ENCODE measurements at regions of chr17 and their contacts with region 1.

Region 1: GRCh38 chr17:44363613-44364159 is at the start of gene FAM171A2:
- DNase-seq: peak; percentile 66 to 74
- ATAC-seq: peak; percentile 76 to 83
- H3K4me3 ChIP-seq: peak within 1 kb of the TSS; percentile 77
- H3K27ac ChIP-seq: peak within 1 kb of the TSS; percentile 76 to 92
- H3K4me1 ChIP-seq: peaks cover 20% of the 10 kb centered on the region
- CTCF ChIP-seq: peak; percentile 98
- EP300 ChIP-seq: no peak
- POLR2A ChIP-seq: peak; percentile 36
- RAD21 ChIP-seq: peak in 1 of 2 experiments; percentile 42; a peak in 2 of 5 replicates
- polyA plus RNA-seq, gene FAM171A2: 1.8 and 2.7 TPM in 2 replicates

Region 2: DNA sequence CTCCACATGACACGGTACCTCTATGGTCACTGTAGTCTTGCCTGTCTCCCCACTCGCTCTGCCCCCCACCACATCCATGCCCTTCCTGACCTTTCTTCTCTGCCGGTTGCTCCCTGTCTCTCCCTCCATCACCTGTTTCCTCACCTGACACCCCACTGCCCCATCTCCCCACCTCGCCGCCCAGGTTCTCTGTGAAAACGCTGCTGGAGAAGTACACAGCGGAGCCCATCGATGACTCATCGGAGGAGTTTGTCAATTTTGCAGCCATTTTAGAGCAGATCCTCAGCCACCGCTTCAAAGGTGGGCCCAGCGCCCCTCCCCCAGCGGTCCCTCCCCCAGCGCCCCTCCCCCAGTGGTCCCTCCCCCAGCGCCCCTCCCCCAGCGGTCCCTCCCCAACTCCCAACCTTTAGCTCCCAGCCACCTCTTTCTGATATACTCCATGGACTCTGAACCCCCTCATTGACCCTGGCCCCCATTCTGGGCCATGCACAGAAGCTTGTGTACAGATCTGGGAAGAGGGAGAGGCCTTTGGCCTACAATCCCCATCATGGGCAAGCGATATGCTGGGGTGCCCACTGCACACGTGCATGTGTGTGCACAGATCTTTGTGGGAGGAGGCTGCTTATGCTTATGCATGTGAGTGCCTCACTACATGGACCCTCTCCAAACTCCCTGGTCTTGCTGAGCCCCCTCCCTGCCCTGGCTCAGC is 51.1 kb before region 1 on chr17:
- CTCF ChIA-PET with region 1: no interaction called
- POLR2A ChIA-PET with region 1: no interaction called
- DNase-seq: no peak
- ATAC-seq: no peak
- H3K4me3 ChIP-seq: no peak overlapping the region
- H3K27ac ChIP-seq: no peak overlapping the region
- H3K4me1 ChIP-seq: peaks cover 15% of the 10 kb centered on the region
- CTCF ChIP-seq: no peak
- EP300 ChIP-seq: no peak
- POLR2A ChIP-seq: no peak
- RAD21 ChIP-seq: no peak

Region 3: GRCh38 chr17:44344939-44345453 is 18.7 kb before region 1 on chr17 and contains the start of gene GRN:
- CTCF ChIA-PET with region 1: interaction called, 179 read pairs
- POLR2A ChIA-PET with region 1: no interaction called
- DNase-seq: peak; percentile 100
- ATAC-seq: peak; percentile 89 to 99
- H3K4me3 ChIP-seq: peak within 1 kb of the TSS; percentile 92
- H3K27ac ChIP-seq: peak within 1 kb of the TSS; percentile 81 to 85
- H3K4me1 ChIP-seq: peaks cover 9% of the 10 kb centered on the region
- CTCF ChIP-seq: no peak
- EP300 ChIP-seq: no peak
- POLR2A ChIP-seq: peak; percentile 73
- RAD21 ChIP-seq: no peak
- polyA plus RNA-seq, gene GRN: 111 and 147 TPM in 2 replicates

Region 4: DNA sequence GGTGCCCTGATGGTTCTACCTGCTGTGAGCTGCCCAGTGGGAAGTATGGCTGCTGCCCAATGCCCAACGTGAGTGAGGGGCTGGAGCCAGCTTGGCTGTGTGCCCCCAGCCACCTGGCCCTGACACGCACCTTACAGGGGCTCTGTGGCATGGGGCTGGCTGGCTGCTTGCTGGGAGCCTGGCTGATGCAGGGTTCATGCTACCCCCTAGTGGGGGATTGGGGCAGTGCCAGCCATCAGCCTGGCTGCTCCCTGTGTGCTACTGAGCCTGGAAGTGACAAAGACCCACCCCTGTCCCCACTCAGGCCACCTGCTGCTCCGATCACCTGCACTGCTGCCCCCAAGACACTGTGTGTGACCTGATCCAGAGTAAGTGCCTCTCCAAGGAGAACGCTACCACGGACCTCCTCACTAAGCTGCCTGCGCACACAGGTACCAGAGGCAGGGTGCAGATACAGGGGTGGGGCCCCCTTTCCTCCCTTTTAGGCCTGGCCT is 12.9 kb before region 1 on chr17:
- CTCF ChIA-PET with region 1: interaction called, 179 read pairs
- POLR2A ChIA-PET with region 1: no interaction called
- DNase-seq: peak; percentile 73 to 96
- ATAC-seq: peak; percentile 78 to 92
- H3K4me3 ChIP-seq: no peak overlapping the region
- H3K27ac ChIP-seq: no peak overlapping the region
- H3K4me1 ChIP-seq: peaks cover 6% of the 10 kb centered on the region
- CTCF ChIP-seq: peak; percentile 81
- EP300 ChIP-seq: no peak
- POLR2A ChIP-seq: no peak
- RAD21 ChIP-seq: peak; percentile 75 to 85

Region 5: DNA sequence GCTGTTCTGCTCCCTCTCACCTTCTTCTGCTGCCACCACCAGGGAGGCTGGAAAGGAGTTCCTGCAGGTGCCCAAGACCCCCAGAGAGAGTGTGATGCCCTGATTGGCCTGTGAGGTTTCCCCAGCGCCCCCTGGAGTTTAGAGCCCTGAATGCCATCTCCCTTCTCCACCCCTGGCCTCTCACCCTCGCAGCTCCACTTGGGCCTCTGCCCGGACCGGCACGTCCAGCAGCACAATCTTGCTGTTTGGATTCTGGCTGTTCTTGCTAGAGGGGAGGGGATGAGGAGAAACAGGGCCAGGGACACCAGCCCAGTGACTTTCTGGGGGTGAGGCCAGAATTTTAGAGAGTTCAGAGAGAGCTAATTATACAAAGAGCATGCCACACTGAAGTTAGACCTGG is 12.4 kb after region 1 on chr17:
- CTCF ChIA-PET with region 1: interaction called, 140 read pairs
- POLR2A ChIA-PET with region 1: no interaction called
- DNase-seq: peak in 1 of 2 experiments; percentile 80
- ATAC-seq: peak; percentile 36 to 82; a peak in 4 of 6 replicates
- H3K4me3 ChIP-seq: no peak overlapping the region
- H3K27ac ChIP-seq: no peak overlapping the region
- H3K4me1 ChIP-seq: no peaks in the 10 kb centered on the region
- CTCF ChIP-seq: peak; percentile 38; the same call in 2 of the 3 replicates
- EP300 ChIP-seq: no peak
- POLR2A ChIP-seq: no peak
- RAD21 ChIP-seq: no peak

Region 6: DNA sequence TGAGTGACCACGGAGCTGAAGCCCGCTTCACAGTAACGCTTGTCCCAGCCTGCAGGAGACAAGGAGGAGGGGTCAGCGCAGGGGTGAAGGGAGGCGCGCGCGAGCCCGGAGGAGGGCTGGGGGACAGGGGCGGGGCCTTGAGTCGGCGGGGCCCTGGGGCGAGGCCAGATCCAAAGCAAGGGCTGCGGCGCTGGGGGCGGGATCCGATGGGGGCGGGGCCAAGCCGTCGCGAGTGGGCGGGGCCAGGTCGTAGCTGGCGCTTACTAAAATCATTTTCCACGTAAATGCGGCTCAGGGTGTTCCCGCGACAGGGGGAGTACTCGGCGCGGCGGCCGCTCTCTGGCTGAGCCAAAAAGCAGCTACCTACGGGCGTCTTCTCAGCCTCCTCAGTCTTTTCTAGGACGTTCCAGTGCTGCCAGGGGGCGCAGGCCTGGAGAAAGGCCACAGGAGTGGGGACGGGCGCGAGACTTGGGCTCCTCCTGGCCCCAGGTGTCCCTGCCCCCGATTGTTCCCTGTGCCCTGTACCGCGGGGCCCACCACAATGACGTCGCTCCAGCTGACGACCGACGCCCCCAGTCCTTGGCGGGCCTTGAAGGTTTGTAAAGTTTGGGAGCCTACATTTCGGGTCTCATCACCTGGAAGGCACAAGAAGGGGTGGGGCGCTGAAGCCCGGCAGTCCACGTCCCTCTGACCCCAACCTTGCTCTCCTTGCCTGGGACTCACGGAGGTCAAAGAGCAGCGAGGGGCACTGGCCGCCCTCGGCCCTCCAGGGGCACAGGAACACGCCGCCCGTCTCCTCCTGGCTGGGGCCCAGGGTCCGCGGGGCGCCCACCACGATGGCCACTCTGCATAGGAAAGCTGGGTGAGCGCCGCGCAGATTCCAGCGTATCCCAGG is 21.8 kb after region 1 on chr17:
- CTCF ChIA-PET with region 1: interaction called, 140 read pairs
- POLR2A ChIA-PET with region 1: no interaction called
- DNase-seq: peak; percentile 86 to 88
- ATAC-seq: peak; percentile 73 to 91
- H3K4me3 ChIP-seq: peak overlapping the region; percentile 54
- H3K27ac ChIP-seq: peak overlapping the region; percentile 73 to 86
- H3K4me1 ChIP-seq: peaks cover 3% of the 10 kb centered on the region; the same call in 1 of the 3 replicates
- CTCF ChIP-seq: peak; percentile 31; the same call in 2 of the 3 replicates
- EP300 ChIP-seq: no peak
- POLR2A ChIP-seq: peak; percentile 31
- RAD21 ChIP-seq: peak in 1 of 2 experiments; percentile 26; a peak in 2 of 5 replicates

Measured in A549 (cell line).